PC-9 (cell line): ENCODE measurements at regions of chr17 and their contacts with region 1.

Region 1: GRCh38 chr17:71849783-71850768 is 270.7 kb upstream of the SOX9 start:
- DNase-seq: no peak
- H3K4me3 ChIP-seq: no peak overlapping the region
- H3K27ac ChIP-seq: no peak overlapping the region
- H3K4me1 ChIP-seq: no peaks in the 10 kb centered on the region
- H3K27me3 ChIP-seq: no peaks in the 10 kb centered on the region
- CTCF ChIP-seq: no peak

Region 2: DNA sequence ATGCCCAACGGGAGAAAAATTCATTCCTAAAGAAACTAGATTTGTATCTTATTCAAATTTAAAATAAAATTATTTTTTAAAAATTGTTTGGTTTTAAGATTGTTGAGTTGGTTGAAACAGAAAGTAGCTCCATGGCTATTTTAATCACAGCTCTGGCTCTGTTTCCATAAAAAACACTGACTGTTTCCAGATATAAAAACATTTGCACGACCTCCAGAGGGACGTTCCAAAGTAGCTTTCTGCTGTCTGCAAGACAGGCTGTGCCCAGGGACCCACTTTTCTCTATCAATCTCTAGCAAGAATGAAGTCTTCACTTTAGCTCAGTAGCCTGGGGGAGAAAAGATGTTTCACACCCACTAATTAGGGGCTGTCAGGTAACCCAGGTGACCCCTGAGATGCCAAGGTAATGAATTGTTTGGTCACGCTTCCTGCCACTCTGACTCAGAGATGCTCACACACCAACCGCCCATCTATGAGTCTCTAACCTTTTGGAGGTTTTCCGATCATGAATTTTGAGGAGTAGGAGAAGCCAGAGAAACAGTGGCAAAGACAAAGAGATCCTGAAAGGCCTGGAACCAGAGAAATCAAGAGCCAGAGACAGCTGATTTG is 50.6 kb after region 1 on chr17:
- CTCF ChIA-PET with region 1: no interaction called
- POLR2A ChIA-PET with region 1: no interaction called
- intact Hi-C with region 1: loop called (anchors 10 kb)
- DNase-seq: peak; percentile 65 to 93
- H3K4me3 ChIP-seq: peak overlapping the region; percentile 35; the same call in 1 of the 2 replicates
- H3K27ac ChIP-seq: peak overlapping the region; percentile 91
- H3K4me1 ChIP-seq: peaks cover 46% of the 10 kb centered on the region
- H3K27me3 ChIP-seq: no peaks in the 10 kb centered on the region
- CTCF ChIP-seq: no peak